ENCODE measurements at regions of chr4 and their contacts with region 1.

Region 1: GRCh38 chr4:78612398-78613178 is 61.0 kb downstream of the ANXA3 start:
- DNase-seq: no peak
- ATAC-seq: peak; percentile 81

Region 2: GRCh38 chr4:78864405-78865024 is 251.9 kb after region 1 on chr4:
- intact Hi-C with region 1: loop called in 1 of 2 experiments (anchors 2 kb)
- DNase-seq: no peak
- ATAC-seq: peak; percentile 49

Region 3: GRCh38 chr4:79281566-79282359 is 669.2 kb after region 1 on chr4:
- intact Hi-C with region 1: no loop called
- DNase-seq: no peak
- ATAC-seq: peak; percentile 44